Activated B cell treated with CpG ODN at 0.5 μM for 24 hours (primary cell): ENCODE measurements at regions of chrX and their contacts with region 1.

Region 1: GRCh38 chrX:110317820-110318658 is at the start of gene AMMECR1:
- DNase-seq: peak; percentile 74
- ATAC-seq: peak; percentile 85
- H3K4me3 Mint-ChIP-seq: peak within 1 kb of the TSS; percentile 94
- H3K27ac Mint-ChIP-seq: peak within 1 kb of the TSS; percentile 97
- H3K4me1 Mint-ChIP-seq: peaks cover 31% of the 10 kb centered on the region
- H3K27me3 Mint-ChIP-seq: no peaks in the 10 kb centered on the region
- CTCF ChIP-seq: no peak
- total RNA-seq, gene AMMECR1: 9.0 and 10.8 TPM in 2 replicates

Region 2: GRCh38 chrX:109732780-109733657 is 585.0 kb before region 1 on chrX and contains the start of gene ACSL4:
- CTCF ChIA-PET with region 1: no interaction called
- POLR2A ChIA-PET with region 1: interaction called, 11 read pairs
- intact Hi-C with region 1: loop called (anchors 1 kb)
- DNase-seq: peak; percentile 82
- ATAC-seq: peak; percentile 92
- H3K4me3 Mint-ChIP-seq: peak within 1 kb of the TSS; percentile 99
- H3K27ac Mint-ChIP-seq: peak within 1 kb of the TSS; percentile 96
- H3K4me1 Mint-ChIP-seq: peaks cover 43% of the 10 kb centered on the region
- H3K27me3 Mint-ChIP-seq: no peaks in the 10 kb centered on the region
- CTCF ChIP-seq: no peak
- total RNA-seq, gene ACSL4: 36.7 and 55.2 TPM in 2 replicates

Region 3: GRCh38 chrX:110172215-110172614 is 145.8 kb before region 1 on chrX:
- CTCF ChIA-PET with region 1: no interaction called
- POLR2A ChIA-PET with region 1: interaction called, 14 read pairs
- intact Hi-C with region 1: loop called (anchors 1 kb)
- DNase-seq: peak; percentile 35
- ATAC-seq: peak; percentile 99
- H3K4me3 Mint-ChIP-seq: no peak overlapping the region
- H3K27ac Mint-ChIP-seq: peak overlapping the region; percentile 82
- H3K4me1 Mint-ChIP-seq: peaks cover 27% of the 10 kb centered on the region
- H3K27me3 Mint-ChIP-seq: no peaks in the 10 kb centered on the region
- CTCF ChIP-seq: no peak

Region 4: GRCh38 chrX:110341189-110342035 is 23.4 kb after region 1 on chrX:
- CTCF ChIA-PET with region 1: no interaction called
- POLR2A ChIA-PET with region 1: interaction called, 8 read pairs
- intact Hi-C with region 1: loop called (anchors 2 kb)
- DNase-seq: no peak
- ATAC-seq: peak; percentile 85
- H3K4me3 Mint-ChIP-seq: no peak overlapping the region
- H3K27ac Mint-ChIP-seq: peak overlapping the region; percentile 73
- H3K4me1 Mint-ChIP-seq: peaks cover 12% of the 10 kb centered on the region
- H3K27me3 Mint-ChIP-seq: no peaks in the 10 kb centered on the region
- CTCF ChIP-seq: no peak

Region 5: DNA sequence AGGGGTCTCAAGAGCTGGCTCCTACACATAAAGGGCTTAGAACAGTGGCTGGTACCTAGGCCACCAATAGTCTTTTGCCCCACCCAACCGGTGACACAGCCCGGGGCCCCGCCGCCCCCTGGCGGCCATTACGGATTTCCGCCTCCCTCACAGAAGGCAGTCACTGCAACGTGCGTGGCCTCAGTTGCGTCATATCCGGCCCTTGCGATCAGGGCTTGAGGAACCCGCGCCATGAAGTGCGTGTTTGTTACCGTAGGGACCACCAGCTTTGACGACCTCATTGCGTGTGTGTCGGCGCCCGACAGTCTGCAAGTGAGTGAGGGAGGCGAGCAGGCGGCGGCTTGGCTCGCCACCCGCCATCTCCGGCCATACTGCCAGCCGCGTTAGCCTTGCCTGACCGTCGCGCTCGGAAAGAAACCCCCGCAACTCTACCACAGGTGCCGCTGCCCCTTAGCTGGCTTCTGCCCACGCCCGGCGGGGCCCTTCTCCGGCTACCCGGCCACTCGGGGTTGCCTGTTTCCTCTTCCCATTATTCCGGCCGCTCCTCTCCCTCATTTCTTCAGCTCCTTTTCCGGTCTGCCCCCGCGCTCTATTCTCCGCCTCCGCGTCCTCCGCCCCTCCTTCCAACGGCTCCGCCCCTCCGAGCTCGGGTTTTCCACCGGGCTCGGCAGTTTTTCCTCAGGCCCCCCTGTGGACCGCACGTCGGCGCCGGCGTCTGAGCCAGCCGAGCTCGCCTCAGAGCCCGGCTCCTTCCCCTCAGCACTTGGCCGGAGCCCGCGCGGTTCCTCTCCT is 1363.1 kb after region 1 on chrX and contains the start of gene ALG13:
- CTCF ChIA-PET with region 1: no interaction called
- POLR2A ChIA-PET with region 1: interaction called, 4 read pairs
- intact Hi-C with region 1: loop called (anchors 5 kb)
- DNase-seq: peak; percentile 73
- ATAC-seq: peak; percentile 85
- H3K4me3 Mint-ChIP-seq: peak within 1 kb of the TSS; percentile 90
- H3K27ac Mint-ChIP-seq: peak within 1 kb of the TSS; percentile 96
- H3K4me1 Mint-ChIP-seq: peaks cover 28% of the 10 kb centered on the region
- H3K27me3 Mint-ChIP-seq: no peaks in the 10 kb centered on the region
- CTCF ChIP-seq: no peak
- total RNA-seq, gene ALG13: 63.4 and 84.2 TPM in 2 replicates